ENCODE measurements at regions of chr6 and their contacts with region 1.

Region 1: GRCh38 chr6:48419992-48420391 is 309.0 kb upstream of the PTCHD4 start:
- DNase-seq: no peak
- H3K4me3 ChIP-seq: no peak overlapping the region
- CTCF ChIP-seq: no peak
- POLR2A ChIP-seq: no peak

Region 2: DNA sequence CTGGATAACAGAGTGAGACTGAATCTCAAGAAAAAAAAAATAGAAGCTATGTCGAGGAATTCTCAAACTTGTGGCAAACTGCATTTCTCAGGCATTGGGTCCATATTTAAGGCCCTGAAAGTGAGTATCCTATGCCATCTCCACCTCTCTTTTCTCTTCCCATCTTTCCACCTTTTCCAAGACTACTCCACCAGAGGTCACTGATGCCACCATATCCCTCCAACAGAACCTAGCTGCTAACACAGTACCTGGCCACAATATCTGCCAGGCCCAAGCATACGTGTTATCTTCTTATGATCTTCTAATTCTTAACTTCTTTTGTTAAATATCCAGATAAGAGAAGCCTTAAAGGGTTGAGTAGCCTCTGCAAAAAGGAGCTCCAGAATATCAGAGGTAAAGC is 729.8 kb before region 1 on chr6:
- intact Hi-C with region 1: no loop called
- DNase-seq: no peak
- H3K4me3 ChIP-seq: no peak overlapping the region
- CTCF ChIP-seq: no peak
- POLR2A ChIP-seq: no peak

Region 3: DNA sequence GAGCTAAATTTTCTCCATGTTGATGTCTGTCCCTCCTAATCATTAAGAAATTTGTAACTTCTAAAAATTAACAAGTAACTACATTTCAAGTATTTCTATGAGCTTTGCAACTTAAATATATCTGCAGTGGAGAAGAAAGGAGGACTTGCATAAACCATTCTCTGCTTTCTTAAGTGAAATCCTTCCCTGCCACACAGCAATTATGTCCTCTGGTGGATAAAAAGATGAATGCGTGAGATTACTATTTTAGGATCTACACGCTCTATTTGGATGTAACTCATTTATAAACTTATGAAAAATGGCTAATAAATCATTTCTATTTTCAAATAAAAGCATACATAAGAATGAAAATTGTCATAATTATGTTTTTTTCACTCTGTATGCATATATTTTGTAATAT is 29.0 kb after region 1 on chr6:
- intact Hi-C with region 1: loop called (anchors 1 kb)
- DNase-seq: no peak
- H3K4me3 ChIP-seq: no peak overlapping the region
- CTCF ChIP-seq: no peak
- POLR2A ChIP-seq: no peak

Measured in lower leg skin (tissue), 4 donors.